ENCODE measurements at regions of chr6 and their contacts with region 1.

Region 1: DNA sequence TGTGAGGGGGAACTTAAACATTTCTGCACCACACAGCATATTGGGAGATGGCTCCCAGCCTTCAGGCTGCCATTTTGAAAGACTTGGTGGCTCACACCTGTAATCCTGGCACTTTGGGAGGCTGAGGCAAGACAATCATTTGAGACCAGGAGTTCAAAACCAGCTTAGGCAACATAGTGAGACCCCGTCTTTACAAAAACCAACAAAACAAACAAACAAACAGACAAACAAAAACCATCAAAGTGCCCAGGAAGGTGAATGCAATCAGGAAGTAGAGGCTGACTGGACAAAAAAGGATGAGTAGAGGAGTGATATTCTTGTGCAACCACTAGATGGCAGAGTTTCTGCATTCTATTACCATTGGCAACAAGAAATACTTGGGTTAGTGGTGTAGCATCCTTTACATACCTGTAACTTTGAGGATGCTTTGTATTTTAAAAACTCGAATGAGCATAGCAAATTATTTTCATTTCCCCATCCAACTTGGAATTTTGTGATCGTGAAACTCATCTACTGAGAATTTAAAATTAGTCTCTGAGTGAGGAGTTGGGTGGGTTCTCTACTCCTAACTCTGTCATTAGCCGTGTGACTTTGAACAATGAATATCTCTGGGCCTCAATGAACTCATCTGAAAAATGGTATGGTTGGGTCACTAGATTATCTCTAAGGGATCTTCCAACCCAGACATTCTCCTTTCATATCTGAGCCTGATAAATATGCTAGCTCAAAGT is 84.4 kb downstream of the CRYBG1 start:
- DNase-seq: peak in 1 of 3 donors; percentile 59
- ATAC-seq: peak; percentile 79
- H3K4me3 ChIP-seq: no peak overlapping the region
- H3K4me1 ChIP-seq: peaks cover 16% of the 10 kb centered on the region
- CTCF ChIP-seq: peak; percentile 70

Region 2: GRCh38 chr6:106512048-106512967 is 67.4 kb after region 1 on chr6:
- intact Hi-C with region 1: loop called in 1 of 2 experiments (anchors 5 kb)
- DNase-seq: peak; percentile 91 to 95 (median 94)
- ATAC-seq: peak; percentile 78
- H3K4me3 ChIP-seq: peak overlapping the region; percentile 80
- H3K4me1 ChIP-seq: peaks cover 16% of the 10 kb centered on the region
- CTCF ChIP-seq: peak; percentile 36

Region 3: GRCh38 chr6:106568530-106568929 is 123.6 kb after region 1 on chr6:
- intact Hi-C with region 1: loop called (anchors 5 kb)
- DNase-seq: no peak
- ATAC-seq: no peak
- H3K4me3 ChIP-seq: no peak overlapping the region
- H3K4me1 ChIP-seq: no peaks in the 10 kb centered on the region
- CTCF ChIP-seq: no peak

Region 4: DNA sequence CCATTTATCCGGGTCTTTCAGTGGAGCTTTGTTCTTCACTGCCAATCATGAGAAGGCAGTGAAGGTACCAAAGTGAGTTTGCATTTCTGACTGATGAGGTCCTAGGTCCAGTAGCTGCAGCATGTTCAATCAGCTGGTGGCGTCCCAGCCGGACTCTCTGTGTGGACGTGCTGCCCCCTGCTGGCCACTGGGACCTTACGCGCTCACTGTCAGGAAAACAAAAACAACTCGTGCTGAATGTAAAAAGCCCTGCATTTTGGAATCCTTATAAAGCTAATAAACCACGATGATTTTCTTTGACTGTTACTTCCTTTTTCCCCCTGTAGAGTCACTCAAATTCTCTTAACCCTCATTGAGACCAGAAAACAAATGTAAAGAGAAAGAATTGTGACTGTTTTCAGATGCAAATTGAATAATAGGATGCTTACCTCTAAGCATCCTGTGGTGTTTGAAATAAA is 534.5 kb after region 1 on chr6:
- intact Hi-C with region 1: loop called (anchors 5 to 10 kb)
- DNase-seq: peak; percentile 88 to 93 (median 92)
- ATAC-seq: peak; percentile 63
- H3K4me3 ChIP-seq: no peak overlapping the region
- H3K4me1 ChIP-seq: peaks cover 11% of the 10 kb centered on the region
- CTCF ChIP-seq: peak; percentile 84

Measured in mucosa of descending colon (tissue), 3 donors.